ENCODE measurements at regions of chr14 and their contacts with region 1.

Region 1: GRCh38 chr14:69574263-69574953 is at the start of gene CCDC177:
- DNase-seq: peak; percentile 63
- ATAC-seq: peak; percentile 85
- H3K4me3 Mint-ChIP-seq: peak within 1 kb of the TSS; percentile 85
- H3K27ac Mint-ChIP-seq: no peak within 1 kb of the TSS
- H3K4me1 Mint-ChIP-seq: peaks cover 13% of the 10 kb centered on the region
- H3K27me3 Mint-ChIP-seq: peaks cover 38% of the 10 kb centered on the region
- CTCF ChIP-seq: peak; percentile 98
- total RNA-seq, gene CCDC177: 0.05 TPM in 1 of 2 replicates, not detected in the other

Region 2: GRCh38 chr14:69129264-69129880 is 445.0 kb before region 1 on chr14:
- CTCF ChIA-PET with region 1: interaction called, 3 read pairs
- POLR2A ChIA-PET with region 1: no interaction called
- intact Hi-C with region 1: loop called (anchors 1 kb)
- DNase-seq: peak; percentile 24
- ATAC-seq: peak; percentile 76
- H3K4me3 Mint-ChIP-seq: no peak overlapping the region
- H3K27ac Mint-ChIP-seq: peak overlapping the region; percentile 54
- H3K4me1 Mint-ChIP-seq: peaks cover 35% of the 10 kb centered on the region
- H3K27me3 Mint-ChIP-seq: no peaks in the 10 kb centered on the region
- CTCF ChIP-seq: peak; percentile 92

Region 3: GRCh38 chr14:69242311-69243224 is 331.8 kb before region 1 on chr14:
- CTCF ChIA-PET with region 1: interaction called, 54 read pairs
- POLR2A ChIA-PET with region 1: no interaction called
- intact Hi-C with region 1: loop called (anchors 1 kb)
- DNase-seq: no peak
- ATAC-seq: peak; percentile 67
- H3K4me3 Mint-ChIP-seq: no peak overlapping the region
- H3K27ac Mint-ChIP-seq: no peak overlapping the region
- H3K4me1 Mint-ChIP-seq: no peaks in the 10 kb centered on the region
- H3K27me3 Mint-ChIP-seq: peaks cover 4% of the 10 kb centered on the region
- CTCF ChIP-seq: no peak

Region 4: DNA sequence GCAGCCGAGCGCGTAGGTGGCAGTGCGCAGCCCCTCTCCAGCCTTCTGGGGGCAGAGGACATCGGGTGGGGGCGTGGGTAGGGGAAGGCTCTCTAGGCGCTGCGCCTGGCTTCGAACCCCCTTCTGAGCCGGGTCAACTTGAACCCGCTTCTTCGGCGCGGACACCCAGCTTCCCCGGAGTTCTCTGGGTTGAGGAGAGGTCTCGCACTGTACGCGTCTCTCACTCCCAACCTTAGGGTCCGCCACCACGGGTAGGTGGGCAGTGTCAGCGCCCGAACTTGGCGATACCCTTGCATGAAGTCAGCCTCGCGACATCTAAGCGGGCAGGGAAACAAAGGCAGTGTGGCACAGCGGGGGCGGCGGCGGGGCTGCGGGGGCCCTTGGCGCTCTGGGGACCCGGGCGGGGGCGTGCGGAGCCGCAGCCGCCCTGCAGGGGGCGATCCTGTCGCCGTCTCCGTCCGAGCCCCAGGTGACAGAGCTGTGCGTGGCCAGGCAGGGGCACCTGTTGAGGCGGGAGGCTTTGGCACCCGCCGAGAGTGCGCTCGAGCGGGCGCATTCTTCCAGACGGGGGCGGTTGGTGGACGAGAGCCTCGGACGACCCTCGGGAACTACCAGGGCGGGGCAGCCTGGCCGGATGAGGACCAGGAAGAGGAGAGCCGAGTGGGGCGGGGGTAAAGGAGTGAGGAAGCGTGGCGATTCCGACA is 313.4 kb before region 1 on chr14:
- CTCF ChIA-PET with region 1: no interaction called
- POLR2A ChIA-PET with region 1: no interaction called
- intact Hi-C with region 1: loop called (anchors 1 kb)
- DNase-seq: peak; percentile 52
- ATAC-seq: peak; percentile 76
- H3K4me3 Mint-ChIP-seq: peak overlapping the region; percentile 76
- H3K27ac Mint-ChIP-seq: no peak overlapping the region
- H3K4me1 Mint-ChIP-seq: peaks cover 13% of the 10 kb centered on the region
- H3K27me3 Mint-ChIP-seq: peaks cover 68% of the 10 kb centered on the region
- CTCF ChIP-seq: no peak

Region 5: GRCh38 chr14:69376439-69376838 is 198.0 kb before region 1 on chr14:
- CTCF ChIA-PET with region 1: no interaction called
- POLR2A ChIA-PET with region 1: no interaction called
- intact Hi-C with region 1: no loop called
- DNase-seq: no peak
- ATAC-seq: no peak
- H3K4me3 Mint-ChIP-seq: no peak overlapping the region
- H3K27ac Mint-ChIP-seq: no peak overlapping the region
- H3K4me1 Mint-ChIP-seq: no peaks in the 10 kb centered on the region
- H3K27me3 Mint-ChIP-seq: no peaks in the 10 kb centered on the region
- CTCF ChIP-seq: no peak

Region 6: DNA sequence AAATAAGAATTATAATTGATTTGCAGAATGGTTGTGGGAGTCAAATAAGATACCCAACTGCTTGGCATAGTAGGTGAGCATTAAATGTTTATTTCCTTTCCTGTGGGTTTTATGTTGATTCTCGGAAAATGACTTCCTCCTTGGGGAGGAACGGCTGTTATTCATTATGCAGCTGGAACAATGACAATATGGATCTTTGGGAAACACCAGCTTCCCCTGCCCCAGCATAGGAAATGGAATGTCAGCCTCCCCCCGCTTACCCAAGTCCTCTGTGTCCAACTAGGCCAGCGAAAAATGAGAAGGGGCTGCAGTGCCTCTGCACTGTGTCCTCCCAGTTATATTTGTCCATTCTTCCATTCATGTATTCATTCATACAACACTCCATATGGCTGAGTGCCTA is 12.0 kb after region 1 on chr14:
- CTCF ChIA-PET with region 1: interaction called, 13 read pairs
- POLR2A ChIA-PET with region 1: no interaction called
- intact Hi-C with region 1: no loop called
- DNase-seq: no peak
- ATAC-seq: no peak
- H3K4me3 Mint-ChIP-seq: no peak overlapping the region
- H3K27ac Mint-ChIP-seq: no peak overlapping the region
- H3K4me1 Mint-ChIP-seq: peaks cover 2% of the 10 kb centered on the region
- H3K27me3 Mint-ChIP-seq: peaks cover 4% of the 10 kb centered on the region
- CTCF ChIP-seq: no peak

Measured in activated B cell treated with CpG ODN at 0.5 μM for 24 hours (primary cell).